ENCODE measurements at regions of chr9 and their contacts with region 1.

Region 1: DNA sequence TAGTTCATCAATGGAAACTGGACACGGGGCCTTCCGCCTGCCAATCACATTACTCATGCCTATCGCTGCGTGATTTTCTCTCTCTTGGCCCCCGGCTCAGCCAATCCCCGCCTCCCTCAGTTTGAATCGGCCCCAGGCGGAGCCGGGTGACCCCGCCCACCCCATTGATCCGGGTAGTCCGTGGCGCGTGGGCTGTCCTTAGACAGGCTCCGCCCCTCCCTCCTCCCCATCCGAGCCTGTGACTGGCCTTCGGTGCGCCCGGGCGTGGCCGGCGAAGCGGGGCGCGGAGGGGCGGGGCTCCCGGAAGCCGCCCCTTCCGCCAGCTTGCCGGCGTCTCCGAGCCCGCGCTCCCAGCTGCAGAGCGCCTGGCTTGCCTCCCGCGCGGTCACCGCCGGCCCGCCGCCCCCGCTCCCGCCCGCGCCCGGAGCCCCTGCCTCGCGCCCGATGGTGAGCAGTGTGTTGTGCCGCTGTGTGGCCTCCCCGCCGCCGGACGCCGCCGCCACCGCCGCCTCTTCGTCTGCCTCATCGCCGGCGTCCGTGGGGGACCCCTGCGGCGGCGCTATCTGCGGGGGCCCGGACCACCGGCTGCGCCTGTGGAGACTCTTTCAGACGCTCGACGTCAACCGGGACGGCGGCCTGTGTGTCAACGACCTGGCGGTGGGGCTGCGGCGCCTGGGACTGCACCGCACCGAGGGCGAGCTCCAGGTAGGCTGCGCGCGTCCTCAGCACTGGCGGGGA is at the start of gene SLC25A25:
- DNase-seq: peak; percentile 100
- ATAC-seq: peak; percentile 95 to 97 (median 96)
- H3K4me3 ChIP-seq: peak within 1 kb of the TSS; percentile 54 to 98 (median 88)
- H3K27ac ChIP-seq: peak within 1 kb of the TSS; percentile 88 to 99 (median 98)
- H3K4me1 ChIP-seq: peaks cover 13 to 76% (median 45%) of the 10 kb centered on the region in 9 donors
- H3K27me3 ChIP-seq: no peaks in the 10 kb centered on the region
- CTCF ChIP-seq: no peak
- total RNA-seq, gene SLC25A25: 3.6 to 20.7 (median 7.5) TPM

Region 2: DNA sequence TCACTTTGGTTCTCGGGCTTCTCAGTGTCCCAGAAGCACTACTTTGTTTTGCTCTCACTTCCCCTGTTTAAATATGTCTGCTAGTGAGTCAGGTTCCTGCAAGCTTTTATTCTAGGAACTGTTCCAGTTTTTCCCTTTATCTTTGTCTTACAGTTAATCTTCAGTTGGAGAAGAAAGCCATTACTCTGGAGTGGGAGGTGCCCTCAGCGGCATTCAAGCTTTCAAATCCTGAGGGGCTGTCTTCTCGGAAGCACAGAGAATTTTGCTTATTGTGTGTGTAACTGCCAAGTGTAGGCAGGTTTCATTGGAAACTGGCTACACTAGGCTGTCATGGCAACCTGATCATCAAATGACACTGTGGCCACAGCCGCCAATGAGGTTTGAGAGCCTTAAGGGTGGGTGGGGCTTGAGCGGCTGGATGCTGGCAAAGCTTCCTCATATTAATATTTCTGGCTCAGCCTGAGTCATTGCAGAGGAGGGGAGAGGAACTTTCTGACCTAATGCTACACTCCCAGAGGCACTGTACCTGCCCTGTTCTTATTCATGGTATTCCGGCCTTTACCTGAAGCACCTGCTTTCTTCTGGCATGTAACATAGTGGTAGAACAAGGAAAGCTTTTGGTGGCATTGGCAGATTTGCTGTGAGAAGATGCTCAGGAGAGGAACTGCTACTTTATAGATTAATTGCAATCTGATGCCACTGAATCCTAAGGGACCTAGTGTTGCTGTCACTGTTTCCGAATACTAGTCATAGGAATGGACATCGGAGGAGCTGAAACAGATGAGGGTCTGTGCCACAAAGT is 26.3 kb after region 1 on chr9:
- intact Hi-C with region 1: loop called in 1 of 10 experiments (anchors 1 kb)
- DNase-seq: peak; percentile 83 to 96
- ATAC-seq: peak; percentile 77 to 88 (median 83)
- H3K4me3 ChIP-seq: peak overlapping the region in 7 of 10 donors; percentile 6 to 37 (median 23)
- H3K27ac ChIP-seq: peak overlapping the region; percentile 44 to 97 (median 86)
- H3K4me1 ChIP-seq: peaks cover 18 to 89% (median 65%) of the 10 kb centered on the region in 9 donors
- H3K27me3 ChIP-seq: no peaks in the 10 kb centered on the region
- CTCF ChIP-seq: no peak

Region 3: GRCh38 chr9:128117613-128118471 is 49.8 kb after region 1 on chr9:
- intact Hi-C with region 1: loop called in 1 of 10 experiments (anchors 10 kb)
- DNase-seq: peak; percentile 93 to 98
- ATAC-seq: peak; percentile 42 to 85 (median 72)
- H3K4me3 ChIP-seq: peak overlapping the region in 1 of 10 donors; percentile 28
- H3K27ac ChIP-seq: peak overlapping the region in 1 of 10 donors; percentile 6
- H3K4me1 ChIP-seq: peaks cover 0 to 12% (median 8%) of the 10 kb centered on the region in 9 donors
- H3K27me3 ChIP-seq: no peaks in the 10 kb centered on the region
- CTCF ChIP-seq: peak; percentile 100

Region 4: DNA sequence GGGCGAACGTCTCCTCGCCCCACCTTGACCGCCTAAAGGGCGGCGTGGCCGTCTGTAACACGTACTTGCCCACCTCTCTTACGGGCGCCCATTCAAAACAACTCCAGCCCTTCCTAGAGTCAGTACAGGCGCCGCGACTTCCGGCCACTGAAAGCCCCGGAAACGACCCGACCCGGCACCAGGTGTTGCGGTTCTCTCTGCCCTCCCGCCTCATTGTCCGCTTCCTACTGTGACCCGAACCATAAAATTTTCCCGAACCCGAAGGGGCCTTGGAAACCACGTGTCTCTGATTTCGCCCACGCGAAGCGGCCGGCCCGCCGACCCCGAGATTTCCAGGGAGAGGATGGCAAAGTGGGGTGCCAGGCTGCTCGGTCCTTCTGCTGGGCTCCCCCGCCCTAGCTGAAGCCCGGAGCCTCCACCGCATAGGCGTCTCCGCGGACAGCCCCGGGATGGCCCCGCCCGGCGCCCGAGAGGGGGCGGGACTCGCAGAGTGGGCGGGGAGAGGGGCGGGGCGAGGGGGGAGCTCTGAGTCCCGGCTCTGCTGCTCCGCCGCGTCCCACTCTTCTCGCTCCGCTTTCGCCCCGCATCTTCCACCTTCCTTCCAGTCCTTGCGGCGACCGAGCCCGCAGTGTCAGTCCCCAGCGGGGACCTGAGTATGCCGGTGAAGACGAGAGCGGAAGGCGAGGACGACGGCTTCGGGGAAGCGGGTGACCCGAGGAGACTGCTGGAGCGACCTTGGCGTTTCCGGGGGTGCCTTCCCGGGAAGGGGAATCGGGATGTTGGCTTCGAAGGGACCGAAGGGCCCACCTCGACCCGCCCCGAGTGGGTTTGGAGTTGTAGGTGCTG is 60.2 kb after region 1 on chr9:
- intact Hi-C with region 1: loop called in 1 of 10 experiments (anchors 2 kb)
- DNase-seq: peak; percentile 84 to 88
- ATAC-seq: peak; percentile 86 to 94 (median 92)
- H3K4me3 ChIP-seq: peak overlapping the region; percentile 55 to 100 (median 91)
- H3K27ac ChIP-seq: peak overlapping the region; percentile 94 to 99 (median 97)
- H3K4me1 ChIP-seq: peaks cover 13 to 49% (median 31%) of the 10 kb centered on the region in 9 donors
- H3K27me3 ChIP-seq: no peaks in the 10 kb centered on the region
- CTCF ChIP-seq: peak in 1 of 9 donors; percentile 3

Region 5: GRCh38 chr9:128322404-128323211 is 254.6 kb after region 1 on chr9 and contains the starts of genes COQ4 and TRUB2:
- intact Hi-C with region 1: no loop called
- DNase-seq: peak; percentile 91 to 94
- ATAC-seq: peak; percentile 96 to 99 (median 98)
- H3K4me3 ChIP-seq: peak within 1 kb of the TSS; percentile 73 to 100 (median 92)
- H3K27ac ChIP-seq: peak within 1 kb of the TSS; percentile 82 to 96 (median 93)
- H3K4me1 ChIP-seq: peaks cover 8 to 44% (median 35%) of the 10 kb centered on the region in 9 donors
- H3K27me3 ChIP-seq: no peaks in the 10 kb centered on the region
- CTCF ChIP-seq: no peak
- total RNA-seq, gene COQ4: 26.5 to 35.8 (median 30.0) TPM
- total RNA-seq, gene TRUB2: 32.8 to 50.3 (median 44.2) TPM